ENCODE measurements at regions of chr15 and their contacts with region 1.

Region 1: DNA sequence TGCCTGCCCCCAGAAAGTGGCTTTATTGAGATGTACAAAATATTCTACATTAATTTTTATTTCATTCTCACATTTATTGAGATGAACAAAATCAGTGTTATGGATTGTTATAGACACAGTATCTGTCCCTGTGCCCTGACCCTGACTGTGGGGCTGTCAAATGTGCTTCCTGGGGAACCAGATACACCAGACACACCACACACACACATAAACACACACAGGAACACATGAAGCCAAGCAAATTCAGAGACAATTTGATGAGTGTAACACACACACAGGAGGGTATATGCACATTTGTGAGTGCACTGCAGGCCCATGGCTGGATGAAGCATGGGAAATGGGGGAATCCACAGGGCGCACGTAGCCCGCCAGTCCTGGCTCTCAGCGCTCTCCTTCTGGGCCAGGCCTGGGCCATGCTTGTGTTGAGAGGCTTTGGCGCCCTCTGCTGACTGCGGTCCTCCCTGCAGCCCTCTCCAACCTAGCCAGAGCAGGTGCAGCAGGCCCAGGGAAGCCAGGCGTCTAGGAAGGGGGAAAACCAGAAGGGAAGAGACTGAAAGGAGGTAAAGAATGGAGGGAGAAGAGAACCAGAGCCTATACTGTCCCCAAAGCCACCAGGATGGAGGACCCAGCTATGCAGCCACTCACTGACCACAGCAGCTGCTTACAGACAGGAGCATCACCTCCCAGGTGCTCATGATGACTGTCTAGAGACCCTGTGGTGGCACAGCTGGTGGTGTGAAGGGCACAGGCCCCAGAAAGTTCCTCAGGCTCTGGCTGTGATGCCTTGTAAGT is 18.0 kb upstream of the LOXL1 start:
- DNase-seq: peak; percentile 79 to 92 (median 86)
- H3K4me3 ChIP-seq: no peak overlapping the region
- H3K27ac ChIP-seq: no peak overlapping the region
- H3K4me1 ChIP-seq: no peaks in the 10 kb centered on the region
- H3K27me3 ChIP-seq: no peaks in the 10 kb centered on the region
- CTCF ChIP-seq: peak; percentile 78 to 92 (median 79)
- EP300 ChIP-seq: no peak
- POLR2A ChIP-seq: no peak

Region 2: DNA sequence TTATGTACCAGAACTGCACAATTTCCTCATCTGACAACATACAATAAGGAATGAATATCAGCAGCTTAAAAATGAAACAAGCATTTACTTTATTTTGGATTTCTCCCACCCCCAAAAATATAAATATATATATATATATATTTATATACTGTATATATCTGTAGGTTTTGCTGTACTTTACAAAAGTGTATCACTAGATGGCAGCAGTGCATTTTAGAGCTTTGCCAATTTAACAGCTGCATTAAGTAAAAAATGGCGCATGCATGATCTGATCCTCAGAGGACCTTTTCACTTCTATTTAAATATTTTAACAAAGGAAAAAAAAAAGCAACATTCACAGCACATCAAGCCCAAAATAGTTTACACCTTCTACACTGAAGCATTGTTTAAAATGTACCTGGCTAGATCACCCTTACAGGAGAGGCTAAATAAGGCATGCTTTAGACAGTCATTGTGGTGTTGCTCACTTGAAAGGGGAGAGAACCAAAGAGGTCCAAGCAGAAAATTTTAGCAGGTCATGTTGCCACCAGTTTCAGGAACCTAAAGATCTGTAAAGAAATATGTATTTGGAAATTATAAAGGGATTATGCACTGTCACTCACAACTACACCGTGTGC is 347.6 kb before region 1 on chr15:
- intact Hi-C with region 1: loop called in 1 of 4 experiments (anchors 10 kb)
- DNase-seq: no peak
- H3K4me3 ChIP-seq: no peak overlapping the region
- H3K27ac ChIP-seq: no peak overlapping the region
- H3K4me1 ChIP-seq: no peaks in the 10 kb centered on the region
- H3K27me3 ChIP-seq: no peaks in the 10 kb centered on the region
- CTCF ChIP-seq: peak in 1 of 3 donors; percentile 46
- EP300 ChIP-seq: no peak
- POLR2A ChIP-seq: no peak

Region 3: GRCh38 chr15:73677146-73677607 is 231.0 kb before region 1 on chr15:
- intact Hi-C with region 1: loop called in 1 of 4 experiments (anchors 5 kb)
- DNase-seq: peak; percentile 55 to 80 (median 65)
- H3K4me3 ChIP-seq: no peak overlapping the region
- H3K27ac ChIP-seq: no peak overlapping the region
- H3K4me1 ChIP-seq: no peaks in the 10 kb centered on the region
- H3K27me3 ChIP-seq: no peaks in the 10 kb centered on the region
- CTCF ChIP-seq: peak; percentile 67 to 88 (median 83)
- EP300 ChIP-seq: no peak
- POLR2A ChIP-seq: no peak

Region 4: GRCh38 chr15:73704869-73705645 is 203.2 kb before region 1 on chr15:
- intact Hi-C with region 1: loop called in 2 of 4 experiments (anchors 5 to 10 kb)
- DNase-seq: peak; percentile 68 to 82 (median 72)
- H3K4me3 ChIP-seq: no peak overlapping the region
- H3K27ac ChIP-seq: peak overlapping the region; percentile 16 to 69
- H3K4me1 ChIP-seq: peaks cover 8% of the 10 kb centered on the region
- H3K27me3 ChIP-seq: no peaks in the 10 kb centered on the region
- CTCF ChIP-seq: peak; percentile 51 to 64 (median 60)
- EP300 ChIP-seq: no peak
- POLR2A ChIP-seq: no peak

Region 5: GRCh38 chr15:74422650-74423430 is 514.6 kb after region 1 on chr15:
- intact Hi-C with region 1: no loop called
- DNase-seq: no peak
- H3K4me3 ChIP-seq: no peak overlapping the region
- H3K27ac ChIP-seq: peak overlapping the region; percentile 28 to 30
- H3K4me1 ChIP-seq: peaks cover 22% of the 10 kb centered on the region
- H3K27me3 ChIP-seq: no peaks in the 10 kb centered on the region
- CTCF ChIP-seq: no peak
- EP300 ChIP-seq: no peak
- POLR2A ChIP-seq: no peak